Prostate gland (tissue), 2 donors: ENCODE measurements at regions of chr16 and their contacts with region 1.

Region 1: DNA sequence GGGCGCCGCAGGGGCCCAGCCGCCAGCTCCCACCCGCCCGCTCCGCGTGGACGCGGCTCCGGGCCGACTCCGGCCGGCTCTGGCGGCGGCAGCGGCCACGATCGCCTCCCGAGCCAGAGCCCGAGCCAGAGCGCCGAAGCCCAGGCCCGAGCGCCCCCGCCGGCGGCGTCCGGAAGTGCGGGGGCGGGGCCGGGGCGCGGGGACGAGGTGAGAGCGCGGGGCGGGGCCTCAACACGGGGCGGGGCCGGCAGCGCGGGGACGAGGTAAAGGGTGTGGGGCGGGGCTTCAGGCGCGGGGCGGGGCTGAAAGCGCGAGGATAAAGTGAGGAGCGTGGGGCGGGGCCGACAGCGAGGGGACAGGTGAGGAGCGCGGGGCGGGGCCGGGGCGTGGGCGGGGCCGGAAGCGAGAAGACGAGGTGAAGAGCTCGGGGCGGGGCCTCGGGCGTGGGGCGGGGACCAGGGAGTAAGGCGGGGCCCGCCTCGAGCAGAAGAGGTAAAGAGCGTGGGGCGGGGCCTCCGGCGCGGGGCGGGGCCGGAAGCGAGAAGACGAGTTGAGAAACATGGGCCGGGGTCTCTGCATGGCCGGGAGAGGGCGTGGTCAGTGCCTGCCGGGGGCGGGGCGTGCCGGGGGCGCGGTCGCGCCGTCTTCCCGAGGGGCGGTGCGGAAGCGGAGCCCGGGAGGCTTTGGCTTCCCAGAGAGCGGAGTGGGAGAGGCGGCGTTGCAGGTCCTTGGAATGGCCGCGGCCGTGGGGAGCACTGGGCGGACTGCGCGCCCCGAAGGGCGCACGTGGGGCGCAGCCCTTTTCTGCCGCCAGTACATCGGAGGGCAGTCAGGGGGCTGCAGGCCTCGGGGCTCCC is at the start of gene AXIN1:
- DNase-seq: peak; percentile 100
- H3K4me3 ChIP-seq: peak within 1 kb of the TSS; percentile 60 to 69
- H3K27ac ChIP-seq: peak within 1 kb of the TSS; percentile 61 to 70
- H3K4me1 ChIP-seq: peaks cover 7% of the 10 kb centered on the region
- H3K27me3 ChIP-seq: no peaks in the 10 kb centered on the region
- CTCF ChIP-seq: peak; percentile 34 to 66 (median 58)
- POLR2A ChIP-seq: peak; percentile 98
- total RNA-seq, gene AXIN1: 31.2 to 35.2 TPM

Region 2: GRCh38 chr16:228818-229730 is 123.7 kb before region 1 on chr16 and contains the start of gene LUC7L:
- intact Hi-C with region 1: loop called (anchors 5 kb)
- DNase-seq: peak; percentile 84
- H3K4me3 ChIP-seq: peak within 1 kb of the TSS; percentile 74 to 90
- H3K27ac ChIP-seq: peak within 1 kb of the TSS; percentile 96 to 99
- H3K4me1 ChIP-seq: peaks cover 5% of the 10 kb centered on the region
- H3K27me3 ChIP-seq: no peaks in the 10 kb centered on the region
- CTCF ChIP-seq: no peak
- POLR2A ChIP-seq: peak; percentile 98
- total RNA-seq, gene LUC7L: 55.1 to 108 TPM

Region 3: GRCh38 chr16:483341-484075 is 130.7 kb after region 1 on chr16:
- intact Hi-C with region 1: no loop called
- DNase-seq: no peak
- H3K4me3 ChIP-seq: no peak overlapping the region
- H3K27ac ChIP-seq: no peak overlapping the region
- H3K4me1 ChIP-seq: no peaks in the 10 kb centered on the region
- H3K27me3 ChIP-seq: no peaks in the 10 kb centered on the region
- CTCF ChIP-seq: no peak
- POLR2A ChIP-seq: no peak